Activated naive CD4-positive, alpha-beta T cell treated with anti-CD3 and anti-CD28 coated beads, Interleukin-2, amount 10 ng/mL, durations not matched to agents 7 days and 5 days (primary cell): ENCODE measurements at regions of chr4 and their contacts with region 1.

Region 1: GRCh38 chr4:22410645-22411247 is 105.1 kb downstream of the ADGRA3 start:
- DNase-seq: no peak
- H3K4me3 Mint-ChIP-seq: no peak overlapping the region
- H3K27ac Mint-ChIP-seq: no peak overlapping the region
- H3K4me1 Mint-ChIP-seq: no peaks in the 10 kb centered on the region
- H3K27me3 Mint-ChIP-seq: no peaks in the 10 kb centered on the region

Region 2: GRCh38 chr4:22369901-22370562 is 40.7 kb before region 1 on chr4:
- CTCF ChIA-PET with region 1: no interaction called
- DNase-seq: no peak
- H3K4me3 Mint-ChIP-seq: no peak overlapping the region
- H3K27ac Mint-ChIP-seq: no peak overlapping the region
- H3K4me1 Mint-ChIP-seq: no peaks in the 10 kb centered on the region
- H3K27me3 Mint-ChIP-seq: no peaks in the 10 kb centered on the region

Region 3: DNA sequence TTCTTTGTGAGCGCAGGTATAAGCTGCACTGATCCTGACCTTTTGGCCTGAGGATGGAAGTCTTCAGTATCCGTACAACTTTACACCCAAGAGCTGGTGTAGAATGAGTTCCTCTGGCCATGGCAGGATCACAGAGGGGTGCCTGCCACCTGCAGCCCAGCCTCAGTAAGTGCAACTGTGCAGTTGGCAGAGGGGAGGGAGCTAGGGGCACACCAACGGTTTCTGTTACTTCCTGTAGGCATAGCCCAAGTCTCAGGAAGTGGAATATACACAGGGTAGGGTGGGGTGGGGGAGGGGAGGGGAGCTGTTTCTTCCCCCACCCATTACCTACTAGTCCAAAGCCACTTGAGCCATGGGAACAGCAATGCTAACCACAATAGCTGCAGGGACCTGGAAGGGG is 196.6 kb after region 1 on chr4:
- CTCF ChIA-PET with region 1: interaction called, 13 read pairs
- DNase-seq: peak; percentile 61
- H3K4me3 Mint-ChIP-seq: no peak overlapping the region
- H3K27ac Mint-ChIP-seq: no peak overlapping the region
- H3K4me1 Mint-ChIP-seq: peaks cover 10% of the 10 kb centered on the region
- H3K27me3 Mint-ChIP-seq: no peaks in the 10 kb centered on the region